PC-9 (cell line): ENCODE measurements at regions of chr3 and their contacts with region 1.

Region 1: GRCh38 chr3:8629151-8630021 is 15.2 kb downstream of the SSUH2 start:
- DNase-seq: peak; percentile 90 to 91
- H3K4me3 ChIP-seq: no peak overlapping the region
- H3K27ac ChIP-seq: peak overlapping the region; percentile 90
- H3K4me1 ChIP-seq: peaks cover 27% of the 10 kb centered on the region
- H3K27me3 ChIP-seq: no peaks in the 10 kb centered on the region
- CTCF ChIP-seq: no peak

Region 2: GRCh38 chr3:8501371-8502131 is 127.8 kb before region 1 on chr3 and contains the start of gene LMCD1:
- CTCF ChIA-PET with region 1: no interaction called
- POLR2A ChIA-PET with region 1: no interaction called
- intact Hi-C with region 1: loop called (anchors 2 kb)
- DNase-seq: peak; percentile 85 to 94
- H3K4me3 ChIP-seq: peak within 1 kb of the TSS; percentile 78
- H3K27ac ChIP-seq: peak within 1 kb of the TSS; percentile 97
- H3K4me1 ChIP-seq: peaks cover 83% of the 10 kb centered on the region
- H3K27me3 ChIP-seq: no peaks in the 10 kb centered on the region
- CTCF ChIP-seq: no peak
- total RNA-seq, gene LMCD1: 10.0 and 10.3 TPM in 2 replicates

Region 3: GRCh38 chr3:8678751-8679150 is 49.4 kb after region 1 on chr3:
- CTCF ChIA-PET with region 1: no interaction called
- POLR2A ChIA-PET with region 1: no interaction called
- intact Hi-C with region 1: loop called (anchors 5 kb)
- DNase-seq: no peak
- H3K4me3 ChIP-seq: peak overlapping the region; percentile 57; the same call in 1 of the 2 replicates
- H3K27ac ChIP-seq: peak overlapping the region; percentile 95
- H3K4me1 ChIP-seq: peaks cover 53% of the 10 kb centered on the region
- H3K27me3 ChIP-seq: no peaks in the 10 kb centered on the region
- CTCF ChIP-seq: no peak

Region 4: GRCh38 chr3:8938021-8938420 is 308.6 kb after region 1 on chr3:
- CTCF ChIA-PET with region 1: no interaction called
- POLR2A ChIA-PET with region 1: no interaction called
- intact Hi-C with region 1: loop called (anchors 5 kb)
- DNase-seq: no peak
- H3K4me3 ChIP-seq: no peak overlapping the region
- H3K27ac ChIP-seq: peak overlapping the region; percentile 84
- H3K4me1 ChIP-seq: peaks cover 29% of the 10 kb centered on the region
- H3K27me3 ChIP-seq: no peaks in the 10 kb centered on the region
- CTCF ChIP-seq: peak; percentile 66

Region 5: DNA sequence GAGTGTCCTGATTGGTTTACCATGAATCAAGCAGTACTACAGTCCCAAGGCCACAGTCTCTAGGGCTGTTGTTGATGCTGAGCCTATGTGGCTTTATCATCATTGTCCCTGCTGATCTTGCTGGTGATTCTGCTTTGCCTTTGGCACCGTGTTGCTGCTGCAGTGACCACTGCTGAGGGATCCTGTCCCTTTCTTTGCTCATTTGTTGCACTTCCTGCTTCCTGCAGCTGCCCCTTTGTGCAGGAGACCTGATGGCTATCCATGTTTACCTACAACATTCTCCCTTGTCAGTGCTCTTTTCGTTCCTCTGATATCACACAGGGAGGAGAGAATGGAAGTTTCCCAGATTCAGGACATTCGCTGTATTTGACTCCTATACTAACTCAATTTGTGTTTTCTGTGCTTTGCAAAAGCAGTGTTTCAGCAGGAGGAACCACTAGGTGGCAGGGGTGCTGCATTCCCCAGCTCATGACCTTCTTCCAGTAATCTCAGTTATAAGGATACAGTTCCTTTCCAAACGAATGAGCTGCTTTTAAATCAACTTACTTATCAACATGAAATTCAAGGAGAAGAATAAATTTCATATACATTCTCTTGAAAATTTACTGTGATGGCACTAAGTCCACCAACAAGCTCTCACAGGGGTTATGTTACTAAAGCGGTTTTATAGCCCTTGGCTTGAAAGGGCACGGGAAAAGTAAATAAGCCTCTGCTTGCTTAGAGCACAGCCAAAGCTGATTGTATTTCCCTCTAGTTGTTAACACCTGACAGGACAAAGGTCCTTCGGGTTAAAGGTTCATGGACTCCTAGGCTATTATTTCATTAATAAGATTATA is 723.7 kb after region 1 on chr3:
- CTCF ChIA-PET with region 1: no interaction called
- POLR2A ChIA-PET with region 1: no interaction called
- intact Hi-C with region 1: no loop called
- DNase-seq: peak; percentile 62 to 71
- H3K4me3 ChIP-seq: no peak overlapping the region
- H3K27ac ChIP-seq: peak overlapping the region; percentile 48
- H3K4me1 ChIP-seq: peaks cover 69% of the 10 kb centered on the region
- H3K27me3 ChIP-seq: no peaks in the 10 kb centered on the region
- CTCF ChIP-seq: peak; percentile 91